GM12878 (cell line): ENCODE measurements at regions of chr17 and their contacts with region 1.

Region 1: GRCh38 chr17:57357399-57357807 is 101.1 kb downstream of the MSI2 start:
- DNase-seq: no peak
- ATAC-seq: peak; percentile 81
- H3K4me3 ChIP-seq: peak overlapping the region; percentile 40
- H3K27ac ChIP-seq: peak overlapping the region; percentile 96
- H3K4me1 ChIP-seq: peaks cover 59% of the 10 kb centered on the region
- H3K27me3 ChIP-seq: no peaks in the 10 kb centered on the region
- CTCF ChIP-seq: no peak
- EP300 ChIP-seq: no peak; a peak in 1 of 4 replicates
- POLR2A ChIP-seq: peak; percentile 68
- RAD21 ChIP-seq: no peak

Region 2: DNA sequence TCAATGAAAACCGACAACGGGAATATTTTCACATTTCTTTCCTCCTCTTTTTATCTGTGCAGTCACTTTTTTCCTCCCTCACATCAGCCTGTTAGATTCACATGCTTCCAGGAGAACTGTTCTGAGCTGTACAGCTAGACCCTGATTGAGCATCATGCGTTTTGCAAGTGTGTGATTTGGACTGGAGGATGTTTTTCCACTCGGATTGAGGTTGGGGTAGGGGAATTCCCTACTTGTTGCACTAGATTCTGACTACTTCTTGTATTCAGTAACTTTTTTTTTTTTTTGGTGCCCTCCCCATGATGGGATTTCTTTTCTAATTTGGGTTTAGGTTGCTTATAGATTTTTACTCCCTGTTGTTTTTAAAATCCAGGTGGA is 96.3 kb before region 1 on chr17:
- CTCF ChIA-PET with region 1: interaction called, 5 read pairs
- POLR2A ChIA-PET with region 1: interaction called, 15 read pairs
- RAD21 ChIA-PET with region 1: interaction called, 19 read pairs
- SMC1A ChIA-PET with region 1: interaction called, 22 read pairs
- in situ Hi-C with region 1: no loop called
- intact Hi-C with region 1: loop called (anchors 5 kb)
- DNase-seq: no peak
- ATAC-seq: no peak
- H3K4me3 ChIP-seq: peak overlapping the region; percentile 95; the same call in 1 of the 2 replicates
- H3K27ac ChIP-seq: peak overlapping the region; percentile 20
- H3K4me1 ChIP-seq: peaks cover 4% of the 10 kb centered on the region; the same call in 1 of the 2 replicates
- H3K27me3 ChIP-seq: no peaks in the 10 kb centered on the region
- CTCF ChIP-seq: no peak
- EP300 ChIP-seq: no peak
- POLR2A ChIP-seq: no peak
- RAD21 ChIP-seq: no peak

Region 3: GRCh38 chr17:57370037-57370581 is 12.7 kb after region 1 on chr17:
- CTCF ChIA-PET with region 1: interaction called, 33 read pairs
- POLR2A ChIA-PET with region 1: interaction called, 80 read pairs
- RAD21 ChIA-PET with region 1: interaction called, 103 read pairs
- SMC1A ChIA-PET with region 1: interaction called, 141 read pairs
- in situ Hi-C with region 1: no loop called
- intact Hi-C with region 1: loop called (anchors 1 kb)
- DNase-seq: no peak
- ATAC-seq: peak; percentile 84
- H3K4me3 ChIP-seq: no peak overlapping the region
- H3K27ac ChIP-seq: peak overlapping the region; percentile 75
- H3K4me1 ChIP-seq: peaks cover 51% of the 10 kb centered on the region
- H3K27me3 ChIP-seq: no peaks in the 10 kb centered on the region
- CTCF ChIP-seq: no peak
- EP300 ChIP-seq: peak; percentile 47 to 88; a peak in 3 of 4 replicates
- POLR2A ChIP-seq: no peak
- RAD21 ChIP-seq: no peak

Region 4: DNA sequence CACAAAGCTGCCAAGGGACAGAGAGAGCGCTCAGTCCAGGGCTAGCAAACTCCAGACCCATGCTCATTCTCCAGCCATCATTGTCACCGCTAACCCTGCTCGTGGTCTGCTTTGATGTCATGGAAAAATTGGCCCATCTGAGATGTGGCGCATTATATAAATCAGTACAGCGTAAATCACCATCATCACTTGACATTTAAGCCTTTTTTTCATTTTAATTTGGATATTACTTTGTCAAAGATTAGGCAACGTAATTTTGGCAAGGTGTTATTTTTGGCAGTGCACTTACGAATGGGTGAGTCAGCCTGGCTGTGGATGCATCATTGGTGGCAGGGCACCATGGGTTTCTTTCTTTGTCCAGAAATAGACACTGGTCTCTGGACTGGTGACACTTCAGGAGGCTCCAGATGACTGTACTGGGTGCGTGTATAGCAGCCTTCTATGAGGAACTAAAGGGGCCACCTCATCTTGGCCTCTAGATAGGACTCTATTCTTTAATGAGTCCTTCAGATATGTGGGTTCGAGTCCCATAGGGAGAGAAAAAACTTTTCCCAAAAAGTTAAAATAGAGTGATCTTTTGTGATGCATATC is 65.3 kb after region 1 on chr17:
- CTCF ChIA-PET with region 1: no interaction called
- POLR2A ChIA-PET with region 1: no interaction called
- RAD21 ChIA-PET with region 1: interaction called, 4 read pairs
- SMC1A ChIA-PET with region 1: interaction called, 9 read pairs
- in situ Hi-C with region 1: no loop called
- intact Hi-C with region 1: loop called (anchors 5 kb)
- DNase-seq: peak; percentile 77
- ATAC-seq: peak; percentile 95
- H3K4me3 ChIP-seq: no peak overlapping the region
- H3K27ac ChIP-seq: peak overlapping the region; percentile 59
- H3K4me1 ChIP-seq: peaks cover 69% of the 10 kb centered on the region
- H3K27me3 ChIP-seq: no peaks in the 10 kb centered on the region
- CTCF ChIP-seq: no peak
- EP300 ChIP-seq: peak in 1 of 2 experiments; percentile 26; a peak in 2 of 4 replicates
- POLR2A ChIP-seq: no peak
- RAD21 ChIP-seq: peak; percentile 14; the same call in 1 of the 2 replicates

Region 5: GRCh38 chr17:57463103-57463851 is 105.9 kb after region 1 on chr17:
- CTCF ChIA-PET with region 1: interaction called, 3 read pairs
- POLR2A ChIA-PET with region 1: interaction called, 4 read pairs
- RAD21 ChIA-PET with region 1: interaction called, 15 read pairs
- SMC1A ChIA-PET with region 1: interaction called, 8 read pairs
- in situ Hi-C with region 1: no loop called
- intact Hi-C with region 1: loop called (anchors 2 kb)
- DNase-seq: peak; percentile 97
- ATAC-seq: peak; percentile 91
- H3K4me3 ChIP-seq: peak overlapping the region; percentile 55
- H3K27ac ChIP-seq: peak overlapping the region; percentile 99
- H3K4me1 ChIP-seq: peaks cover 91% of the 10 kb centered on the region
- H3K27me3 ChIP-seq: no peaks in the 10 kb centered on the region
- CTCF ChIP-seq: no peak
- EP300 ChIP-seq: peak; percentile 95 to 96
- POLR2A ChIP-seq: peak; percentile 75
- RAD21 ChIP-seq: no peak

Region 6: DNA sequence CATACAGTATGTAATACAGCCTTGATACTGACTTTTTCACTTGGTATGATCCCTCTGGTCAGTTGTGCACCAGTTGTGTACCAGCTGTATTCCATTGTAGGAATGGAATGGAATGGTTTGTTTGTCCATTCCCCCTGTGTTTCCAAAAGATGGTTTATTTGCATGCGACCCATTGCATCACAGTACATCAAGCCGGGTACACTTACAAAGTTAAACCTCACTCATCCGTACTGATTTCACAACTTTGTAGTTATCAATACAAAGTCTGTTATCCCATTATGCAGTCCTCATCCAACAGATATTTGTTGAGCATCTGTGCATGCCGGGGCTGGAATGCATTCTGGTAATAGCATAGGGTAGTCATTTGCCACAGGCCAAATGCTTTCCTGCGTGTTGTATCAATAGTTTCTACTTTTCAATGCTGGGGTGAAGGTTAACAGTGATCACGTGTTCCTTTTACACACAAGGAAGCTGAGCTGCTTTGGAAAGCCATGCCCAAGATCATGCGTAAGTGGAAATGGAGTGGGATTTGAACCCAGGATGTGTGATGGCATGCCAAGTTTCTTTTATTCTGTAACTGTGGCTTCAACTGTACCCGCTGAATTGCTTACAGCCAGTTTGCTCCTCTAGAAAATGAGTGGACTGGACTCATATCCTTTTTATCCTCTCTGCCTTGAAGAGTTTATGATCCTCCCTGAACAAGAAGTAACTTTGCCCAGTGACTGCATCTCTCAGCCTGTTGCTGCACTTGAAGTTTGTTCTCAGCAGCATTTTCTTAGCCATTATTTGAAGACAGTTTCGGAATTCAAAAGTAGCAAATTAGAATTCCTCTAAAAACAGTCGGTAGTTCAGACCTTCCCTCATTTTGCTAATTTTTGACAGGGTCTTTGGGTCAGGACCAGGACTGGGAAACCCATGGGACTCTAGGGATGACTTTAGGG is 159.2 kb after region 1 on chr17:
- CTCF ChIA-PET with region 1: no interaction called
- POLR2A ChIA-PET with region 1: no interaction called
- RAD21 ChIA-PET with region 1: no interaction called
- SMC1A ChIA-PET with region 1: no interaction called
- in situ Hi-C with region 1: no loop called
- intact Hi-C with region 1: no loop called
- DNase-seq: no peak
- ATAC-seq: no peak
- H3K4me3 ChIP-seq: no peak overlapping the region
- H3K27ac ChIP-seq: no peak overlapping the region
- H3K4me1 ChIP-seq: peaks cover 6% of the 10 kb centered on the region
- H3K27me3 ChIP-seq: no peaks in the 10 kb centered on the region
- CTCF ChIP-seq: no peak
- EP300 ChIP-seq: no peak
- POLR2A ChIP-seq: no peak
- RAD21 ChIP-seq: no peak